ENCODE measurements at regions of chr2 and their contacts with region 1.

Region 1: GRCh38 chr2:9163306-9164111 is 43.1 kb upstream of the ASAP2 start:
- DNase-seq: peak; percentile 62
- H3K4me3 Mint-ChIP-seq: no peak overlapping the region
- H3K27ac Mint-ChIP-seq: peak overlapping the region; percentile 74
- H3K4me1 Mint-ChIP-seq: peaks cover 20% of the 10 kb centered on the region
- H3K27me3 Mint-ChIP-seq: no peaks in the 10 kb centered on the region
- CTCF ChIP-seq: no peak

Region 2: GRCh38 chr2:9178904-9179571 is 15.5 kb after region 1 on chr2:
- CTCF ChIA-PET with region 1: interaction called, 10 read pairs
- POLR2A ChIA-PET with region 1: interaction called, 12 read pairs
- intact Hi-C with region 1: no loop called
- DNase-seq: peak; percentile 64
- H3K4me3 Mint-ChIP-seq: peak overlapping the region; percentile 35
- H3K27ac Mint-ChIP-seq: peak overlapping the region; percentile 88
- H3K4me1 Mint-ChIP-seq: peaks cover 44% of the 10 kb centered on the region
- H3K27me3 Mint-ChIP-seq: no peaks in the 10 kb centered on the region
- CTCF ChIP-seq: no peak

Region 3: DNA sequence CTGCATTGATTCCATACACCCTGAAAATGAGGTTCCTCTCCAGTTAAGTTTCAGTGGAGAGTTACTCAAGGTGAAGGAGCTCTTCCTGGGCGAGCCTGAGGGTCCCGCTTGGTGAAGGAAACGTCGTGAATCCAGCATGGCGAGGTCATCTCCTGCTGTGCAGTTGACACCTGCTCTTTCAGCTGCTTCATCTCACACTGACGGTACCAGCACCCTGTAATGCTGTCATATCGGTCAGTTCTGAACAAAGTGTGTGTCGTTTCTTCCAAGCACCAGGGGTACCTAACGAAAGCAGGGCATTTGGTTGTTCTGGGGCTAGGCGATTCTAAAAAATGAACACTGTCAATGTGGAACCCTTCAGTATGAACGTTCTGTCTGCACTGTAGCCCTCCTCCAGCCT is 207.2 kb after region 1 on chr2:
- CTCF ChIA-PET with region 1: no interaction called
- POLR2A ChIA-PET with region 1: no interaction called
- intact Hi-C with region 1: no loop called
- DNase-seq: no peak
- H3K4me3 Mint-ChIP-seq: no peak overlapping the region
- H3K27ac Mint-ChIP-seq: peak overlapping the region; percentile 31
- H3K4me1 Mint-ChIP-seq: peaks cover 4% of the 10 kb centered on the region
- H3K27me3 Mint-ChIP-seq: no peaks in the 10 kb centered on the region
- CTCF ChIP-seq: no peak

Measured in MCF 10A (cell line).